T-cell (primary cell): ENCODE measurements at regions of chr20 and their contacts with region 1.

Region 1: DNA sequence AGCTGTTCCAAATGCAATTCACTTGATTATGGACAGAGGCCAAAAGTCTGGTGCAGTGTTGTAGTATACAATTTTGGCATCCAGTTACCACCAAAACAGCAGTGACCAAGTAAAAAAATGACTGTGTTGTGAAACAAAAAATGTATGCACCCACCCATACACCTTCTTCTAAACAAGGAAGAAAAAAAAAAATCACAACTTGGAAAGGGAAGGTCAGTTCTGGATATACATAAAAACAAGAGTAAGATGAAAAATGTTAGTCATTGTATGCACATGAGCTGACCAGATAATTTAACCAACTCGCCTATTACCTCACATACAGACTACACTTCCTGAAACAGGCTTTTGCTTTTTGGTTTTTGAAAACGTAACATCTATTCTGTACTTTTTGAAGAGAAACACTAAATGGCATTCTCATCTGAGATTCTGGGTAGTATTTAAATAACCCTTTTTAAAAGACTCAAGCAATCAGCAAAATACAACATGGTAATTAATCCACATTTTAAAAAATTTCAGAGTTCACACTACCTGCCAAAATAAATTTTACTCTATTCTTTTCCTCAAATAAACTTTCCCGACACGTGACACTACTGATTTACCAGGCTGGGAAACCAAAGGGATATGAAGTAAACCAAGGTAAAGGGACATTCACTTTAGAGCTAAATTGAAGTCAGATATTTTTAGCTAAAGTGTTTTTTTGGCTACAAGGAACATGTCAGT is 141.6 kb upstream of the SHLD1 start:
- DNase-seq: peak in 1 of 35 experiments; percentile 36
- ATAC-seq: no peak
- H3K4me3 ChIP-seq: peak overlapping the region; percentile 83 to 94
- H3K4me3 Mint-ChIP-seq: peak overlapping the region; percentile 96 to 98 (median 96)
- H3K27ac ChIP-seq: peak overlapping the region; percentile 99
- H3K27ac Mint-ChIP-seq: peak overlapping the region; percentile 76 to 83
- H3K4me1 ChIP-seq: peaks cover 38 to 39% of the 10 kb centered on the region in 2 experiments
- H3K4me1 Mint-ChIP-seq: peaks cover 53 to 65% (median 61%) of the 10 kb centered on the region in 3 donors
- H3K27me3 ChIP-seq: no peaks in the 10 kb centered on the region
- H3K27me3 Mint-ChIP-seq: no peaks in the 10 kb centered on the region

Region 2: DNA sequence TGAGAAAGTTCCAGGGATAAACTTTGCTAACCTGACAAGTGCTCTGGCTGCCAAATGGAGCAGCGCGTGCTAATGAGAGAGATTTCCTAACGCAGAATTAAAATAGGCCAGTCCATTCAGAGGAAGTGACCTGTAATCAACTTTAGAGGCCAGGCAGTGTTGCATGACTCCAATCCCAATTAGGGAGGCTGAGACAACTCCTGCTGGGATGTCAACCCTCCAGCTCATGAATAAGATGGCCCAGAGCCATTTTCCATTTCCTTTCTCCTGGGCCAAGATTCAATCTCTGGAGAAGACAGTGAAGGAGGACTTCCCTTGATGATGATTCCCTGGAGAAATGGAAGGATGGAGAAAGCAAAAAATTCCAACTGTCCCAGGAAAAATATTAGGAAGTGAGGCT is 1351.7 kb before region 1 on chr20:
- CTCF ChIA-PET with region 1: no interaction called
- POLR2A ChIA-PET with region 1: no interaction called
- DNase-seq: no peak
- ATAC-seq: no peak
- H3K4me3 ChIP-seq: no peak overlapping the region
- H3K4me3 Mint-ChIP-seq: no peak overlapping the region
- H3K27ac ChIP-seq: no peak overlapping the region
- H3K27ac Mint-ChIP-seq: peak overlapping the region in 1 of 2 donors; percentile 10
- H3K4me1 ChIP-seq: no peaks in the 10 kb centered on the region
- H3K4me1 Mint-ChIP-seq: no peaks in the 10 kb centered on the region
- H3K27me3 ChIP-seq: peaks cover 0 to 4% of the 10 kb centered on the region in 2 experiments
- H3K27me3 Mint-ChIP-seq: peaks cover 20 to 36% of the 10 kb centered on the region in 2 donors

Region 3: DNA sequence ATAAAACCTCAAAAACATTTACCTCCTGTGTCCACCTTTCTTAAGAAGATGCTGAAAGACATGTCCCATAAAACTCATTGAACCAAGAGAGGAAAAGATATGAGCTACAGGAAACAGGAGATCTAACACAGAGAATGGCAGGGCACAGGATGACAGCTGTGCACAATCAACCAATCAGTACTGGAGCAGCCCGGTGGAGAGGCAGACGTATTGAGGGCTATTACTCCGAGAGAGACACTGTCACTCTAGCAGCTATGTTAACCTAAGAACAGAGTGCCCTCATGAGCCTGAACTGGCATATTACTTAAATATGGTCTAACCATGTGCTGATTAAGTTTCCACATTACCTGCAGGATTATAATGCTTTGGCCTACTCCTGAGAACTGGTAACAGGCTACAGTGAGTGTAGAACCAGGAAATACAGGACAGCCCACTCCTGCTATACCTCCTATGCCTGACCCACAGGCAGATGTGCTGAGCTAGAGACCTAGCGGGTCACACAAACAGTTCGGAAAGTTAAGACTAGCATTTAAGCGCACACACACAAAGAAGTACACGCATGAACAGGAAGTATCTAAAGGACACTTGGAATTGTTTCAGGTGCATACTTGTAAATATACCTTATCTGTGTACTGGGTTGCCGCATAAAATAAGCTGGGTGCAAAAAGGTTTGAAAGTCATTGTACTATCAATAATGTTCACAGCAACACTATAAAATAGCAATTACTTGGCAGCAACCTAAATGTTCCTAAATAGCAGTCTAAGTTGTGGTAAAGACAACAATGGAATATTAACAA is 57.7 kb before region 1 on chr20:
- CTCF ChIA-PET with region 1: no interaction called
- POLR2A ChIA-PET with region 1: no interaction called
- DNase-seq: no peak
- ATAC-seq: peak in 2 of 4 experiments; percentile 35 to 52
- H3K4me3 ChIP-seq: no peak overlapping the region
- H3K4me3 Mint-ChIP-seq: no peak overlapping the region
- H3K27ac ChIP-seq: no peak overlapping the region
- H3K27ac Mint-ChIP-seq: no peak overlapping the region
- H3K4me1 ChIP-seq: peaks cover 0 to 4% of the 10 kb centered on the region in 2 experiments
- H3K4me1 Mint-ChIP-seq: peaks cover 17 to 21% (median 20%) of the 10 kb centered on the region in 3 donors
- H3K27me3 ChIP-seq: no peaks in the 10 kb centered on the region
- H3K27me3 Mint-ChIP-seq: no peaks in the 10 kb centered on the region

Region 4: DNA sequence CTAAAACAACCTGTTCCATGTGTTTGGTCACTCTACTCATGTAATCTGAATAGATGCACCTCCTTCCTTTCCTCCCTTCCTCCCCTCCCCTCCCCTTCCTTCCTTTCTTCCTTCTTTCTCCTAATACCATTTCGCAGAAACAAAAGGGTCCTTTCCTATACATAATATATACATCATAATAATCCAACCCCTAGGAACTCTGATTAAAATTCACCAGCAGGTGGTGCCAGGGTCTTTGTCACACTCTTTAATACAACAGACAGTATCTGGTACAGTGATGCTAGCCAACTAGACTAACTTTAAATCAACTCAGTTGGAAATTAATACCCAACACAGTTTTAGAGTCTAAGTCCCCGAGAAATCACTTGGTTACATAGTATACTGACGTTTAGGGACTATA is 39.6 kb before region 1 on chr20:
- CTCF ChIA-PET with region 1: interaction called, 4 to 12 read pairs
- POLR2A ChIA-PET with region 1: interaction called, 3 to 5 read pairs
- DNase-seq: peak in 33 of 35 experiments; percentile 7 to 76 (median 47)
- ATAC-seq: peak; percentile 74 to 82 (median 78)
- H3K4me3 ChIP-seq: no peak overlapping the region
- H3K4me3 Mint-ChIP-seq: peak overlapping the region in 1 of 3 donors; percentile 65
- H3K27ac ChIP-seq: no peak overlapping the region
- H3K27ac Mint-ChIP-seq: peak overlapping the region; percentile 18 to 80
- H3K4me1 ChIP-seq: peaks cover 0 to 22% of the 10 kb centered on the region in 2 experiments
- H3K4me1 Mint-ChIP-seq: peaks cover 21 to 36% (median 35%) of the 10 kb centered on the region in 3 donors
- H3K27me3 ChIP-seq: no peaks in the 10 kb centered on the region
- H3K27me3 Mint-ChIP-seq: no peaks in the 10 kb centered on the region

Region 5: DNA sequence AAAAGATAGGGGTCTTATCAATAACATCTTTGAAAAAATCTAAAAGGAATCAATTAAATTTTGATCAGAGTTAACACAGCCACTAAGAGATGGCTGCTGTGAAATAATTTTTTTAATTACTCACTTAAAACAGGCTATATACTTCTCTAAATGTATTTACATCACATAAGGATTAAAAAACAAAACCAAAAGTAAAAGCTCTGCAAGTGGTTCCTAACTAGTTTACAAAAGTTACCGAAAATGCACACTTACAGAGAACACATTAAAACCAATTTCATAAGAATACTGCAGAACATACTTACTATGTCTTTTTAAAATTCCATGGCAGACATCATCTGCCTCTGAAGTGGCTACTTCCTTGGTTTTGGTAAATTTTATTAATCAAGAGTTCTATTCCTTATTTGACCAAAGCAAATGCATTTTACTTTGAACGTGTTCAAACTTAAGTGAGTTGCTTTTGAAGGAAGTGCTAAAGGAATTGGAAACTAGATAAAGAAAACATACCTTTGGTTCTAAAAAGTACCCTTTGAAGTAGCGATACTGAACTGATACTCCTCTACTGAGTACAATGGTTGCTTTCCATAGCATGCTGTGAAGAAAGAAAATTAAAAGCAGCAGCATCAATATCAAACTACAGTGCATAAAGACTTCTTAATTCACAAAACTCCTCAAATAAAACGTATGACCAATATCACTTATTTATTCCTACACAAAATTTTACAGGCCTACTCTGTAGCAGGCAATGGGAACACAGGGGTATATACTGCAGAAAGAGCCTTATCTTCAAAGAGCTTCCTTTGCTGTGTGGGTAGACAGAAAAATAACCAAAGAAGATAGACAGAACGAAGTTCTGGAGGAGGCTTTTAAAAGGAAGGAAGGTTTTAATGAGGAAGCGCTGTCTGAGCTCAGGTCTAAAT is 15.5 kb before region 1 on chr20:
- CTCF ChIA-PET with region 1: interaction called, 3 to 16 read pairs
- POLR2A ChIA-PET with region 1: interaction called, 9 to 15 read pairs
- DNase-seq: peak in 1 of 35 experiments; percentile 25
- ATAC-seq: peak; percentile 68 to 82 (median 74)
- H3K4me3 ChIP-seq: peak overlapping the region; percentile 18 to 27
- H3K4me3 Mint-ChIP-seq: peak overlapping the region; percentile 0 to 75 (median 67)
- H3K27ac ChIP-seq: peak overlapping the region; percentile 83
- H3K27ac Mint-ChIP-seq: peak overlapping the region; percentile 72 to 98
- H3K4me1 ChIP-seq: peaks cover 19 to 51% of the 10 kb centered on the region in 2 experiments
- H3K4me1 Mint-ChIP-seq: peaks cover 67 to 78% (median 68%) of the 10 kb centered on the region in 3 donors
- H3K27me3 ChIP-seq: no peaks in the 10 kb centered on the region
- H3K27me3 Mint-ChIP-seq: no peaks in the 10 kb centered on the region

Region 6: DNA sequence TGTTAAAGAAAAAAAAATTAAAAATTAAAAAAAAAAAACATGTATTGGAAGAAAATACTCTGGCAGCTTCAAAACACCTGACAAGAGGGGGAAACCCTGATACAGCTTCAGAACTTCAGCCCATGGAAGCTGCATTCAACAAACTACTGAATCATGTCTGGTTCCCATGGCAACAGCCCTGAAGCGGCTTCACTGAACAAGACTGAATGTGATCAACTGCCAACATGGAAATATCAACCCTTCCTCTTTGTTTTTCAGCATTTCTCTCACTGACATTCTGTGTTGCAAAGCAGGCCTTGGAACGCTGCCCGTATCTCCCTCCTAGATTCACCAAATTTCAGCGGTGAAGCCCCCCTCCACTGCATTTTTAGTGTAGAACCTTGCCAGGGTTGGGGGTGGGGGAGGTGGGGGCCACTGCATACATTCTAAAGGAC is 50.3 kb after region 1 on chr20:
- CTCF ChIA-PET with region 1: no interaction called
- POLR2A ChIA-PET with region 1: no interaction called
- DNase-seq: peak in 31 of 35 experiments; percentile 6 to 76 (median 34)
- ATAC-seq: peak in 3 of 4 experiments; percentile 52 to 98 (median 54)
- H3K4me3 ChIP-seq: no peak overlapping the region
- H3K4me3 Mint-ChIP-seq: no peak overlapping the region
- H3K27ac ChIP-seq: no peak overlapping the region
- H3K27ac Mint-ChIP-seq: no peak overlapping the region
- H3K4me1 ChIP-seq: peaks cover 0 to 10% of the 10 kb centered on the region in 2 experiments
- H3K4me1 Mint-ChIP-seq: peaks cover 9 to 22% (median 10%) of the 10 kb centered on the region in 3 donors
- H3K27me3 ChIP-seq: no peaks in the 10 kb centered on the region
- H3K27me3 Mint-ChIP-seq: no peaks in the 10 kb centered on the region

Region 7: GRCh38 chr20:5691918-5692618 is 83.5 kb after region 1 on chr20:
- CTCF ChIA-PET with region 1: no interaction called
- POLR2A ChIA-PET with region 1: interaction called in 1 of 2 experiments, 10 read pairs
- DNase-seq: peak in 2 of 35 experiments; percentile 14 to 28
- ATAC-seq: peak in 1 of 4 experiments; percentile 39
- H3K4me3 ChIP-seq: no peak overlapping the region
- H3K4me3 Mint-ChIP-seq: no peak overlapping the region
- H3K27ac ChIP-seq: no peak overlapping the region
- H3K27ac Mint-ChIP-seq: peak overlapping the region in 1 of 2 donors; percentile 6
- H3K4me1 ChIP-seq: peaks cover 0 to 2% of the 10 kb centered on the region in 2 experiments
- H3K4me1 Mint-ChIP-seq: peaks cover 0 to 4% (median 3%) of the 10 kb centered on the region in 3 donors
- H3K27me3 ChIP-seq: peaks cover 0 to 2% of the 10 kb centered on the region in 2 experiments
- H3K27me3 Mint-ChIP-seq: no peaks in the 10 kb centered on the region

Region 8: DNA sequence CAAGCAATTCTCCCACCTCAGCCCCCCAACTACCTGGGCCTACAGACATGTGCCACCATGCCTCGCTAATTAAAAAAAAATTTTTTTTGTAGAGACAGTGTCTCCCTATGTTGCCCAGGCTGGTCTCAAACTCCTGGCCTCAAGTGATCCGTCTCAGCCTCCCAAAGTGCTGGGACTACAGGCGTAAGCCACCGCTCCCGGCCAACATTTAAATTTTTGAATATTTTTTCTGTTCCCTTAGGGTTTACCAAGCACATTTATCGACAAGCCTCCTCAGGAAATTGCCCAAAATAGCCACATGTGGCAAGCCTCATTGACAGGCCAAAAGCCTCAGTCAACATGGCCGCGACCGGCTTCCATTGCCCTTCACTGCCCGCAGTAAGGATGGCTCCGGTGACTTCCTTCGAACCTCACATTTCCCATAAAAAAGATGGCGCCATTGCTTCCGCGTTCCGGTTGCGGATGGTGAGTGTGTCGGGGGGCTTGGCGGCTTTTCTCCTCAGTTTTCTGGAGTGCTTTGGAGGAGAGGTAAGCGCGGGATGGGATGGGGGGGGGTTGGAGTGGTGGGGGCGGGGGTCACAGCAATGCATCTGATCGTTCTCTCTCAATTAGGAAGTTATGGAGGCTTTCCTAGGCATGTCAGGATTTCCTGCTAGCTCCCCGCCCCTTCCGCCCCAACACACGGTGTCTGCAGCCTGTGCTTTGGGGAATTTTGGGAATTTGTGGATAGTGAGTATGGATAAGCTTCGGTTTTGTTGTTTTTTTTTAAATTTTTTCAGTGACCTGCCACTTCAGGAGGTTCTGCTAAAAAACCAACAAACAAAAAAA is 141.6 kb after region 1 on chr20 and contains the start of gene SHLD1:
- CTCF ChIA-PET with region 1: interaction called in 1 of 2 experiments, 4 read pairs
- POLR2A ChIA-PET with region 1: interaction called, 6 to 17 read pairs
- DNase-seq: peak; percentile 67 to 90 (median 77)
- ATAC-seq: peak; percentile 94 to 98 (median 97)
- H3K4me3 ChIP-seq: peak within 1 kb of the TSS; percentile 75 to 96
- H3K4me3 Mint-ChIP-seq: peak within 1 kb of the TSS; percentile 83 to 90 (median 90)
- H3K27ac ChIP-seq: peak within 1 kb of the TSS; percentile 42
- H3K27ac Mint-ChIP-seq: peak within 1 kb of the TSS; percentile 91
- H3K4me1 ChIP-seq: peaks cover 6 to 13% of the 10 kb centered on the region in 2 experiments
- H3K4me1 Mint-ChIP-seq: peaks cover 24 to 32% (median 29%) of the 10 kb centered on the region in 3 donors
- H3K27me3 ChIP-seq: no peaks in the 10 kb centered on the region
- H3K27me3 Mint-ChIP-seq: no peaks in the 10 kb centered on the region
- total RNA-seq, gene SHLD1: 10.0 to 15.8 (median 14.2) TPM

Region 9: DNA sequence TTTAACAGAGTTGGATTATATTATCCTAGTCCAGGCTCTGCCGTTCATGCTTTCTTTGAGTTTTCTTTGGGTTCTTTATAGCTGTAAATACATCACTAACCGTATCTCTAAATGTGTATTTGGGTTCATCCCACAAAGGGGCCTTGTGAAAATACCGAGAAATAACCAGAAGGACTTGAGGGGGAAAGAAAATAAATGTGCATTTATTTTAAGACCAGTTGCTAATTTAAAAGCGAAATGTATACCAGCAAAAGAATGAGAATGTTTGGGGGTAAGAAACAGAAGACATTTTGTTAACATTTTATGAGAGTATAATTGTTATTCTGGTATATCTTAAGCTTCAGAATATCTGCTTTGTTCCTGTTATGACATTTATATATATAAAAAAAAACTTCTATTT is 406.4 kb after region 1 on chr20:
- CTCF ChIA-PET with region 1: no interaction called
- POLR2A ChIA-PET with region 1: interaction called in 1 of 2 experiments, 10 read pairs
- DNase-seq: no peak
- ATAC-seq: no peak
- H3K4me3 ChIP-seq: no peak overlapping the region
- H3K4me3 Mint-ChIP-seq: no peak overlapping the region
- H3K27ac ChIP-seq: no peak overlapping the region
- H3K27ac Mint-ChIP-seq: no peak overlapping the region
- H3K4me1 ChIP-seq: peaks cover 0 to 2% of the 10 kb centered on the region in 2 experiments
- H3K4me1 Mint-ChIP-seq: peaks cover 52 to 56% (median 52%) of the 10 kb centered on the region in 3 donors
- H3K27me3 ChIP-seq: no peaks in the 10 kb centered on the region
- H3K27me3 Mint-ChIP-seq: no peaks in the 10 kb centered on the region